Adrenal gland (tissue), 19 donors: ENCODE measurements at regions of chr15 and their contacts with region 1.

Region 1: GRCh38 chr15:31488426-31489204 is 162.0 kb downstream of the KLF13 start:
- DNase-seq: peak; percentile 50 to 87 (median 74)
- H3K4me3 ChIP-seq: no peak overlapping the region
- H3K27ac ChIP-seq: peak overlapping the region in 3 of 5 donors; percentile 2 to 49 (median 35)
- H3K4me1 ChIP-seq: peaks cover 0 to 15% of the 10 kb centered on the region in 2 donors
- H3K27me3 ChIP-seq: peaks cover 6% of the 10 kb centered on the region
- CTCF ChIP-seq: peak; percentile 89 to 99 (median 96)
- POLR2A ChIP-seq: peak in 1 of 2 donors; percentile 23

Region 2: GRCh38 chr15:31200735-31201151 is 287.9 kb before region 1 on chr15:
- intact Hi-C with region 1: loop called in 1 of 2 experiments (anchors 5 kb)
- DNase-seq: peak; percentile 53 to 88 (median 65)
- H3K4me3 ChIP-seq: no peak overlapping the region
- H3K27ac ChIP-seq: peak overlapping the region in 1 of 5 donors; percentile 34
- H3K4me1 ChIP-seq: no peaks in the 10 kb centered on the region
- H3K27me3 ChIP-seq: no peaks in the 10 kb centered on the region
- CTCF ChIP-seq: peak in 4 of 6 experiments; percentile 41 to 56 (median 49)
- POLR2A ChIP-seq: no peak

Region 3: DNA sequence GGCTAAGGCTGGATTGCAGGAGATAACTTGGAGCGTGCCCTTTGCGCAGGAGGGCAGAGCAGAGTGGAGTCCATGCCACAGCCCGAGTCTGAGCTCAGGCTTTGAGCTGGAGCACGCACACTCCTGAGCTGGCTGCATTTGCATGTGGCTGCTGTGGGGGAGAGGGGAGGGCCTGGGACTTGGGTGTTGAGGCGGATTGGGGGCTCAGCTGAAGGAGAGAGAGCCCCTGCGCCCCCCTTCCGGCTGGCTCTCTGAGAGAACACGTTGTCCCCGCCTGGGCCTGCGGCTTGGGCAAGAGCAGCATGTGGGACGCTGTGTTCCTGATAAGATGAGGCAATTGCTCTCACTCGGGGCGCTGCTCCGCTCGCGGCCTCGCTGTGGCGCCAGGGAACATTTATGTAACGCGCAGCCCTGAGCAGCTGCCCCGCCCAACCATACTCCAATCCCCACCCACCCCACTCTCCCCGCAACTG is 122.9 kb before region 1 on chr15:
- intact Hi-C with region 1: loop called in 1 of 2 experiments (anchors 10 kb)
- DNase-seq: peak; percentile 87 to 98 (median 94)
- H3K4me3 ChIP-seq: peak overlapping the region in 1 of 4 donors; percentile 18
- H3K27ac ChIP-seq: peak overlapping the region in 4 of 5 donors; percentile 69 to 95 (median 88)
- H3K4me1 ChIP-seq: peaks cover 29 to 81% of the 10 kb centered on the region in 2 donors
- H3K27me3 ChIP-seq: no peaks in the 10 kb centered on the region
- CTCF ChIP-seq: peak in 4 of 6 experiments; percentile 4 to 54 (median 34)
- POLR2A ChIP-seq: peak; percentile 40 to 47